ENCODE measurements at regions of chr1 and their contacts with region 1.

Region 1: DNA sequence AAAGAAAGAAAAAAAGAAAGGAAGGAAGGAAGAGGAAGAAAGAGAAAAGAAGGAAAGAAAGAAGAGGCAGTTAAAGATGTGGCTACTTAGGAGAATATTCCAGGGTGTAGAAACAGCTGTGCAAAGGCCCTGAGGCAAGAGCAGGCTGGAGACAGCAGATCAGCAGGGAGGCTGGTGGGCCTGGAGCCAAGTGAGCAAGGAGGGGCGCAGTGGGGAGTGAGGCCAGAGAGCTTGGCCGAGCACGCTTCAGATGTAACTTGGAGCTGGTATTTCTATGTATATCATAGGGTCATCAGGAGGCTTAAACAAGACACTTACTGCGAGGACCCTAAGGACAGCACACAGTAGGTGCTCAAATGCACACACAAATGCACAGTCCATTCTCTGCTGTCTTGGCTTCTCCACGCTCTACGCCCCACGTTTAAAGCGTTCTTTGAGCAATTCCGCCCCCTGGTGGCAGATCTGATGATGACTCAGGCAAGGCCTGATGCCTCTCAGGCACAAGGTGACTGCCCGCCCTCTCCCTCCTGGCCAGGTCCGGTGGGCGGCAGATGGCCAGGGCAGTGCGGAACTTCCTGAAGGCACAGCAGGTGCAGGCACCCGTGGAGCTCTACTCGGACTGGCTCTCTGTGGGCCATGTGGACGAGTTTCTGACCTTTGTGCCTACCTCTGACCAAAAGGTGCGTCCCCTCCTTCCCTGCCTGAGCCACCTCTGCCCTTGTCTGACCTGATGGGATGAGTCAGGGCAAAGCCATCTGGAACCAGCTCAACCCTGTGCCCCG is 11.9 kb upstream of the PADI3 start:
- DNase-seq: peak; percentile 79 to 98
- H3K4me3 ChIP-seq: no peak overlapping the region
- H3K27ac ChIP-seq: no peak overlapping the region
- H3K4me1 ChIP-seq: peaks cover 0 to 5% (median 0%) of the 10 kb centered on the region in 4 experiments; a peak in 4 of 7 replicates
- H3K27me3 ChIP-seq: no peaks in the 10 kb centered on the region; a peak in 1 of 7 replicates
- CTCF ChIP-seq: peak; percentile 88 to 97 (median 90)
- EP300 ChIP-seq: no peak
- POLR2A ChIP-seq: no peak
- RAD21 ChIP-seq: peak; percentile 97

Region 2: DNA sequence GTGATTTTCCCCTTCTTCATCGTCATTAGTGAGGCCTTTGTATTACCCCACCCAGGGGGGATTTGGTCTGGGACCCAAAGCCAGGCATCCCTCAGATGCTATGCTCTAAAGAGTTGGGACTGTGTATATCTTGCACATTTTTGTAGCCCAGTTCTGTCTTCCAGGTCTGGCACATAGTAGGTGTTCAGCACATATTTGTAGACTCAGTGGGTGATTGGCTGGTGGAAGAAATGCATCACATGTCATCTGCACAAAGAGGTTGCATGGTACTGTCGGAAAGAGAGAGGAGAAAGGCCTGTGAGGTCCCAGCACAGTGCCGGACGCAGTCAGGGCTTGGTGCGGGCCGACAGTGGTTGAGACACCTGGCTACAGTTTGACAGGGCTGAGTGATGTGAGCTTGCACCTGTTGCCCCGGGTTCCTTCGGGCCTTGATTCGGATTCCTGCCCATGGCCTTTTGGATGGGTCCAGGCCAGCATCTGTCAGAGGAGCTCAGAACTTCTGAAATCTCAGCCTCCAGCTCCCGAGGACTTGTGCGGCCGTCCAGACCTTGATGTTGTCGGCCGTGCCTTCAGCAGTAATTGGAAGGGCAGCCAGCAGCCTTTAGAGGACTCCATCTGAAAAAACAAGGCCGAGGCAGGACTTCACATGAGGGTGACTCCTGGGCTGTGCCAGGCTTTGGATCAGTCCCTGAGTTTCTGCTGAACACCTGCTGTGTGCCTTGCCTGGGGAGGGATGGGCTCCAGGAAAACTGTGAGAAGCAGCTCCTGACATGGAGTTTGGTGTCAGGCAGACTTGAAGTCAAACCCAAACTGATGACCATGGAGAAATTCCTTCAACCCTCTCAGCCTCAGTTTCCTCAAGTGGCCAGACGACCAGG is 72.9 kb before region 1 on chr1:
- CTCF ChIA-PET with region 1: interaction called, 11 read pairs
- POLR2A ChIA-PET with region 1: no interaction called
- DNase-seq: no peak
- H3K4me3 ChIP-seq: no peak overlapping the region
- H3K27ac ChIP-seq: no peak overlapping the region
- H3K4me1 ChIP-seq: peaks cover 0 to 4% (median 3%) of the 10 kb centered on the region in 4 experiments; a peak in 5 of 7 replicates
- H3K27me3 ChIP-seq: no peaks in the 10 kb centered on the region
- CTCF ChIP-seq: no peak
- EP300 ChIP-seq: no peak
- POLR2A ChIP-seq: no peak
- RAD21 ChIP-seq: no peak

Region 3: GRCh38 chr1:17198476-17199258 is 38.3 kb before region 1 on chr1:
- CTCF ChIA-PET with region 1: interaction called, 11 read pairs
- POLR2A ChIA-PET with region 1: no interaction called
- DNase-seq: no peak
- H3K4me3 ChIP-seq: no peak overlapping the region
- H3K27ac ChIP-seq: no peak overlapping the region
- H3K4me1 ChIP-seq: no peaks in the 10 kb centered on the region; a peak in 1 of 7 replicates
- H3K27me3 ChIP-seq: no peaks in the 10 kb centered on the region
- CTCF ChIP-seq: no peak
- EP300 ChIP-seq: no peak
- POLR2A ChIP-seq: no peak
- RAD21 ChIP-seq: no peak

Region 4: GRCh38 chr1:17212487-17213121 is 24.4 kb before region 1 on chr1:
- CTCF ChIA-PET with region 1: interaction called, 18 read pairs
- POLR2A ChIA-PET with region 1: interaction called, 3 read pairs
- DNase-seq: no peak
- H3K4me3 ChIP-seq: no peak overlapping the region
- H3K27ac ChIP-seq: no peak overlapping the region
- H3K4me1 ChIP-seq: peaks cover 0 to 14% (median 5%) of the 10 kb centered on the region in 4 experiments; a peak in 6 of 7 replicates
- H3K27me3 ChIP-seq: peaks cover 0 to 3% (median 0%) of the 10 kb centered on the region in 4 experiments; a peak in 2 of 7 replicates
- CTCF ChIP-seq: no peak
- EP300 ChIP-seq: no peak
- POLR2A ChIP-seq: no peak
- RAD21 ChIP-seq: no peak

Region 5: GRCh38 chr1:17222557-17222956 is 14.4 kb before region 1 on chr1:
- CTCF ChIA-PET with region 1: interaction called, 23 read pairs
- POLR2A ChIA-PET with region 1: interaction called, 4 read pairs
- DNase-seq: no peak
- H3K4me3 ChIP-seq: no peak overlapping the region
- H3K27ac ChIP-seq: no peak overlapping the region
- H3K4me1 ChIP-seq: no peaks in the 10 kb centered on the region; a peak in 1 of 7 replicates
- H3K27me3 ChIP-seq: no peaks in the 10 kb centered on the region; a peak in 1 of 7 replicates
- CTCF ChIP-seq: no peak
- EP300 ChIP-seq: no peak
- POLR2A ChIP-seq: no peak
- RAD21 ChIP-seq: no peak

Region 6: DNA sequence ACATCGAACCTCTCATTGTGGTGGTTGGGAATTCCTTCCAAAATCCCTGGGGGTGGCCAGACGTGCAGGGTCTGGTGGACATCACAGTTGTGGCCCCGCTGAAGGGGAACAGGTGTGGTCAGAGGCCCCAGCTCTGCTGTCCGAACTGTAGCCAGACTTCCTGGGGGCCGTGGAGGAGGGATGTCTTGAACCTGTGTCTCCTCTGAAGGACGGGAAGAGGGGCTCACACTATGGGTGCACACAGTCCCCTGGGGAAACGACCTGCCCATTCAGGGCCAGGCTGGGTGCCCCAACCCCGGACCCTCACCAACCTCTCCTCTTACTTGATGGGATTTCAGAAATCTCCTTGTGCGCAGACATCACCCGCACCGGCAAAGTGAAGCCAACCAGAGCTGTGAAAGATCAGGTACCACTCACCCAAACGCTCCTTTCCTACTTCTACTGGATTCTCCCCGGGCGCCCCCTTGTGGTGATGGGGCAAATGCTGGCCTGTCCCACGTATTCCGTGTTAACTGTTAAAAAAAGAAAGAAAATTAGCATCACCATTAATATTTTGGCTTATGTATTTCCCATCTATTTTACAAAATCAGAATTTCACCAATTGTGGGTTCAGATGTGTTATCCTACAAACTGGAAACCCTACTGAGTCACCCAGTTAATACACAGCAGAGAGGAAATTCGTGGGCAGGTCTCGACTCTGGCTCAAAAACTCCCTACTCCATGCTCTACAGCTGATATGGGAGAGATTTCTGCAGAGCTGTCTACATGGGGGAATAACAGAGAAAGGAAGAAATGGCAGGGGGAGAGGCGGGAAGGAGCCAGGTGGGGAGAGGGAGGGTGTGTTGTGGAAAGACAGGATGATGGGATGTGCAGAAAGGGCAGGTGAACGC is 99.1 kb after region 1 on chr1:
- CTCF ChIA-PET with region 1: interaction called, 11 read pairs
- POLR2A ChIA-PET with region 1: interaction called, 3 read pairs
- DNase-seq: peak; percentile 23 to 96
- H3K4me3 ChIP-seq: no peak overlapping the region
- H3K27ac ChIP-seq: no peak overlapping the region
- H3K4me1 ChIP-seq: no peaks in the 10 kb centered on the region
- H3K27me3 ChIP-seq: peaks cover 0 to 3% (median 0%) of the 10 kb centered on the region in 4 experiments; a peak in 3 of 7 replicates
- CTCF ChIP-seq: peak; percentile 78 to 85 (median 80)
- EP300 ChIP-seq: no peak
- POLR2A ChIP-seq: no peak
- RAD21 ChIP-seq: peak; percentile 72 to 82

Region 7: GRCh38 chr1:17414022-17414421 is 177.1 kb after region 1 on chr1:
- CTCF ChIA-PET with region 1: no interaction called
- POLR2A ChIA-PET with region 1: no interaction called
- DNase-seq: no peak
- H3K4me3 ChIP-seq: no peak overlapping the region
- H3K27ac ChIP-seq: no peak overlapping the region
- H3K4me1 ChIP-seq: peaks cover 0 to 4% (median 0%) of the 10 kb centered on the region in 4 experiments; a peak in 2 of 7 replicates
- H3K27me3 ChIP-seq: no peaks in the 10 kb centered on the region
- CTCF ChIP-seq: no peak
- EP300 ChIP-seq: no peak
- POLR2A ChIP-seq: no peak
- RAD21 ChIP-seq: no peak

Measured in H1 (cell line).